HCT116 (cell line): ENCODE measurements at regions of chr2 and their contacts with region 1.

Region 1: DNA sequence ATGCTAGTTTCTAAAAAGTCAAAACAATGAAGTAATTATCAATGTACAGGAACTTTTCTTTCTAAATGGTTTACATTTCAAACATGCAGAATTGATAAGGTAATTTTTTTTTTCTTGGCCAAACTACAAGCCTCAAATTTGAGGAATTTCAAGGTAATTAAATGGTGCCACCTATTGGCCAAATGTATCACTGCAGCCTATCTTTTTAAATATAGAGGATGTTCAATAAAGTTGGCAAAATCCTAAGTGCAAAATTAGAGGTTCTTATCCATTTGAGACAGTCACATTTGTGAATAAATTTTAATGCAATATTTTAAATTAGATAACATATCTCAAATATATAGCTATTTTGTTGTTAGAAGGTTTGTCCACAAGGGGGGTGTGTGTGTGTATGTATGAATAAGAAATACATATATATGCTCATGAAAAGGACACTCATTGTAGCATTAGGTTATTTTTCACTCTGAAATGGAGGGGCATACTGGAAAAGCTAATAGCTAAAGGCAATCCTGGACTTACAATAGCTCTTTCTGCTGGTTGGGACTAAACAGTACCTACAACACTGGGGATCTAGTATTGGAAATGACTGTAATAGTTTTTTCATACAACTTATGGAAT is 26.2 kb downstream of the MMADHC start:
- DNase-seq: no peak
- ATAC-seq: no peak
- H3K4me3 ChIP-seq: no peak overlapping the region
- H3K27ac ChIP-seq: no peak overlapping the region
- H3K4me1 ChIP-seq: no peaks in the 10 kb centered on the region
- H3K27me3 ChIP-seq: no peaks in the 10 kb centered on the region
- CTCF ChIP-seq: peak; percentile 66 to 94 (median 79)
- POLR2A ChIP-seq: no peak
- RAD21 ChIP-seq: peak; percentile 82

Region 2: GRCh38 chr2:149330126-149331022 is 231.0 kb before region 1 on chr2 and contains the start of gene LYPD6:
- CTCF ChIA-PET with region 1: no interaction called
- POLR2A ChIA-PET with region 1: no interaction called
- RAD21 ChIA-PET with region 1: no interaction called
- intact Hi-C with region 1: loop called (anchors 5 kb)
- DNase-seq: peak; percentile 38
- ATAC-seq: peak; percentile 92
- H3K4me3 ChIP-seq: peak within 1 kb of the TSS; percentile 65 to 69
- H3K27ac ChIP-seq: peak within 1 kb of the TSS; percentile 66
- H3K4me1 ChIP-seq: peaks cover 6 to 14% of the 10 kb centered on the region in 2 experiments; a peak in 2 of 4 replicates
- H3K27me3 ChIP-seq: no peaks in the 10 kb centered on the region
- CTCF ChIP-seq: peak in 2 of 3 experiments; percentile 7 to 9; a peak in 1 of 6 replicates
- POLR2A ChIP-seq: peak; percentile 3
- RAD21 ChIP-seq: no peak
- total RNA-seq, gene LYPD6: 3.0 TPM

Region 3: DNA sequence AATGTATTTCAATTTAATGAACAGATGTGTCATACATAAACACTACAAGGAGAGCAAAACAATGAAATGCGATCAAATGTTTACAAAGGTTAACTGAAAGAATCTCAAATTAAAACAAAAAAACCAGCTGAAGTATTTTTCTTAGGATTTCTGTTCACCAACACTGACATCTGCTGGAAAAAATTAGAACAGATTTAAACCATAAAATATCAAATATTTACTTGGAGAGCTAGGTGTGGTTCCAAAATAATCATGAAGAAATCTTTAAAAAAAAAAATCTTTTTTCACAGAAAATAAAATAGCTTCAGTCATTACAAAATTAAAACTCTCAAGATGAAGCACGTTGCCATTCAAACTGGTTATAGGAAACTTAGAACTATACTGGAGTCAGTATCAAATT is 12.3 kb after region 1 on chr2:
- CTCF ChIA-PET with region 1: interaction called, 10 read pairs
- POLR2A ChIA-PET with region 1: no interaction called
- RAD21 ChIA-PET with region 1: no interaction called
- intact Hi-C with region 1: no loop called
- DNase-seq: no peak
- ATAC-seq: no peak
- H3K4me3 ChIP-seq: no peak overlapping the region
- H3K27ac ChIP-seq: no peak overlapping the region
- H3K4me1 ChIP-seq: no peaks in the 10 kb centered on the region
- H3K27me3 ChIP-seq: no peaks in the 10 kb centered on the region
- CTCF ChIP-seq: peak; percentile 11 to 50 (median 19); a peak in 4 of 6 replicates
- POLR2A ChIP-seq: no peak
- RAD21 ChIP-seq: no peak; the same call in 1 of the 2 replicates